Activated CD4-positive, alpha-beta T cell treated with anti-CD3 and anti-CD28 coated beads, Interleukin-2, amount 10 ng/mL, durations not matched to agents 24 days and 14 days (primary cell): ENCODE measurements at regions of chr11 and their contacts with region 1.

Region 1: GRCh38 chr11:9314291-9315036 is at the start of gene TMEM41B:
- DNase-seq: peak; percentile 100
- H3K4me3 Mint-ChIP-seq: peak within 1 kb of the TSS; percentile 99
- H3K27ac Mint-ChIP-seq: peak within 1 kb of the TSS; percentile 97
- H3K4me1 Mint-ChIP-seq: peaks cover 38% of the 10 kb centered on the region
- H3K27me3 Mint-ChIP-seq: peaks cover 23% of the 10 kb centered on the region
- total RNA-seq, gene TMEM41B: 26.5 and 30.5 TPM in 2 replicates

Region 2: DNA sequence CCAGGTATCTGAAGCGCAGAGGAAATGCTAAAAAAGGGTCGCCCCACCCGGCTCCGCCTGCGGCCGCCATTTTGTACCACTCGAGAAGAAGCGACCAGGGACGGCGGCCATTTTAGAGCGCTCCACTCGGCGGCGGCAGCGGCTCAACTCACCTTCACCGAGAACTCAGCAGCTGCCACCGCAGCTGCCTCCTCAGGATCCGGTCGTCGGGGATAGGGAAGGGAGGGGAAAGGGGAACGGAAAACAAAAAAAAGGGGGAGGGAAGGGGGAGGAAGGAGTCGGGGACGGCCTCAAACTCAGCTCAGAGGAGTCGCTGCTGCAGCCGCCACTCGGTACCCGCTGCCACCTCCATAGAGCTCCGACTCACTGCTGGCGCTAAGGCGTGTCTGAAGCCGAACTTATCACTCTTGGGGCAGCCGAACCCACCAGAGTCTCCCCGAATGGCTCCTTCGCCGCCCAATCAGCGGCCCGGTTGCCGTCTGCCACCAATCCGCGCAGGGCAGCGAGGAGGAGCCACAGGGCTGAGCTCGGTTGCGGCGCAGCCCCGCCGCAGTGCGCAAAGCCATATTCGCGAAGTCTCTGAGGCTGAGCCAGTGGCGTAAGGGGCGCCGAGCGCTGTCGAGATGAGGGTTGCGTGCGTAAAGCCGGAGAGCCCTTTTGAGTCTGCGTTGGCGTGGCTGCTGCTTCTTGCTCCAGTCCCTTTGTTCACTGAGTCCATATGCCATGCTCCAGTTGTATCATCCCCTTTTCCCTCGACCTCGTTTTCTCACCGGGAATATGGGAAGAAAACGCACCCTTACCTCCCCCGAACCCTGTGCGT is 1494.3 kb after region 1 on chr11 and contains the start of gene EIF4G2:
- intact Hi-C with region 1: loop called (anchors 5 kb)
- DNase-seq: peak; percentile 99
- H3K4me3 Mint-ChIP-seq: peak within 1 kb of the TSS; percentile 95
- H3K27ac Mint-ChIP-seq: peak within 1 kb of the TSS; percentile 98
- H3K4me1 Mint-ChIP-seq: peaks cover 31% of the 10 kb centered on the region
- H3K27me3 Mint-ChIP-seq: no peaks in the 10 kb centered on the region
- total RNA-seq, gene EIF4G2: 1,071 and 1,120 TPM in 2 replicates